ENCODE measurements at regions of chr9 and their contacts with region 1.

Region 1: DNA sequence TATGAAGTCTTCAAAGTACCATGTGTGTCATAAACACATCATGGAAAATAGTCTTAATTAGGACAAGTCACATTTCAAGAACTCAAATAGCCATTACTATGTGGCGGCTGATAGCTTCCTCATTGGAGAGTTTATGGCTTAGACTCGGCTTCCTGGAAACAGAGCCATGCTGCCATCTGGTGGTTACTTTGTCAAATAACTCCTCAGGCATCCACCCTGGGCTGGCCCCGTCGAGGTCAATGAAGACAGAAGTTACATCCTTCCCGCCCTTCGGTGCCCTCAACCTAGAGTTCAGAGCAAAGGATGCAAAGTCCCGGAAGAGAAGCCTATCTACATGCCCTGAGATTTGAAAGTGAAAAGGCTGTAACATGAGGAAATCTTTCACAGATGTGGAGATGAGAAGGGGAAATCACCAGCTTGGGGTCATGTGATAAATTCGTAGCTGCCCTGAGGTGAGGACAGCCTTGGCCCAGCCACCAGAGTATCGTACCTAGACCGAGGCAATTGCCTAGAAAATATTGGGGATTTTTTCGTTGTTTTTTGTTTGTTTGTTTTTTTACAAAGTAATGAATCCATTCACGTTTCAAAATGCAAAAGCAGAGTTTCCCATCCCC is 45.5 kb upstream of the ZNF169 start:
- DNase-seq: peak; percentile 69
- ATAC-seq: peak; percentile 93 to 96

Region 2: GRCh38 chr9:93612796-93613154 is 600.8 kb before region 1 on chr9:
- intact Hi-C with region 1: no loop called
- DNase-seq: no peak
- ATAC-seq: no peak

Region 3: DNA sequence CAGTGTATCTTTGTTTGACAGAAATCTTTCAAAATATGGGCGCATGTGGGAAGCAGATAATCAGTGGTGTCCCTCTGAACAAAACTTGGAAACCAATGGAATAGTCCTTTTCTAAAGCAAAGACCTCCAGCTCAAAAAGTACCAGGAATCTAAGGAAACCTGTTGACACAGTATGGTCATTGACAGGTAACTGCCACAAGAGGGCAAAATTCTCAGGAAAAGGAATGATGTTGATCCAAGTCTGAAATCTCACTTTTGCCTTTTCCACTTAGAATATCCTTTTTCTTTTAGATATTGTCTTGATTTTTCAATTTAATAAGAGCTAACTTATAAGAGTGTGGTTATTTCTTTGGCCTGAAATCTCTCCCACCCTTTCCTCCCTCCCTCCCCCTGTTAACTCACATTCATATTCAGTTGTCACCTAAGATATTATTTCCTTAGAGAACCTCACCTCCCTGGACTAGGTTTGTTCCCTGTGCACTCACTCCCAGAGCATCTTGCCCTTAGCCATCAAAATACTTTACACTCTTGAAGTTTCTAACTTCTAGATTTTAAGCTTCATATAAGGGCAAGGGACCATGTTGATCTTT is 199.5 kb before region 1 on chr9:
- intact Hi-C with region 1: loop called in 1 of 2 experiments (anchors 10 kb)
- DNase-seq: no peak
- ATAC-seq: peak in 1 of 2 donors; percentile 49

Region 4: GRCh38 chr9:94065535-94065961 is 148.1 kb before region 1 on chr9:
- intact Hi-C with region 1: loop called (anchors 1 to 5 kb)
- DNase-seq: peak; percentile 79
- ATAC-seq: peak; percentile 77 to 87